Ascending aorta (tissue), 2 donors: ENCODE measurements at regions of chrX and their contacts with region 1.

Region 1: DNA sequence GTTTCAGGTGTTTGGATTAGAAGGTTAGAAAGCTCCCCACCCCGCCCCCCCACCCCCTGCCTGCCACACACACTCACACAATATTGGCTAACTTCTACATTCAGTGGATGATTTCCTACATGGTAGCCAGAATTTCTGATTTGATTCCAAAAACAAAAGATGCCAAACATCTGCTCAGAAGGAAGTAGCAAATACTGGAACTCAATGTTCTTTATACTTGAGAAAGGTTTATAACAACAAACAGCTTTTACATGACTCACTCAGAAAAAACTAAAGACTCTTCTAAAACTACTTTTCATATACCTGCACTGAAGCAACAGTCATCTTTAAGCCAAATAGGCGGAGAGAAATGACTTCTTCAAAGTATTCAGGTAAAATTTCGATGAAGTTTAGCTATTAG is 750.5 kb upstream of the POU3F4 start:
- DNase-seq: no peak
- H3K4me3 ChIP-seq: no peak overlapping the region
- H3K27ac ChIP-seq: no peak overlapping the region
- H3K4me1 ChIP-seq: no peaks in the 10 kb centered on the region
- H3K27me3 ChIP-seq: no peaks in the 10 kb centered on the region
- CTCF ChIP-seq: no peak

Region 2: DNA sequence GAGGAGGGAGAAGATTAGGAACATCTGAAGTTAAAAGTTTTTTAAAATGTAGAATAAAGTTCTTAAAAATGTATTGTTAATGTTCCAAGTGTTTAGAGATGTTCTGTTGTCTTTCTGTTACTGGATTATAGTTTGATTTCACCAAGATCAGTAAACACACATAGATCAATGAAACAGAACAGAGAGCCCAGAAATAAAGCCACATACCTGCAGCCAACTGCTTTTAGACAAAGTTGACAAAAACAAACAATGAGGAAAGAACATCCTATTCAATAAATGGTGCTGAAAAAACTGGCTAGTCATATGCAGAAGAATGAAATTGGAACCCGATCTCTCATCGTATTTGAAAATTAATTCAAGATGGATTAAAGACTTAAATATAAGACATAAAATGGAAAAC is 215.8 kb before region 1 on chrX:
- intact Hi-C with region 1: no loop called
- DNase-seq: no peak
- H3K4me3 ChIP-seq: no peak overlapping the region
- H3K27ac ChIP-seq: no peak overlapping the region
- H3K4me1 ChIP-seq: no peaks in the 10 kb centered on the region
- H3K27me3 ChIP-seq: no peaks in the 10 kb centered on the region
- CTCF ChIP-seq: no peak

Region 3: DNA sequence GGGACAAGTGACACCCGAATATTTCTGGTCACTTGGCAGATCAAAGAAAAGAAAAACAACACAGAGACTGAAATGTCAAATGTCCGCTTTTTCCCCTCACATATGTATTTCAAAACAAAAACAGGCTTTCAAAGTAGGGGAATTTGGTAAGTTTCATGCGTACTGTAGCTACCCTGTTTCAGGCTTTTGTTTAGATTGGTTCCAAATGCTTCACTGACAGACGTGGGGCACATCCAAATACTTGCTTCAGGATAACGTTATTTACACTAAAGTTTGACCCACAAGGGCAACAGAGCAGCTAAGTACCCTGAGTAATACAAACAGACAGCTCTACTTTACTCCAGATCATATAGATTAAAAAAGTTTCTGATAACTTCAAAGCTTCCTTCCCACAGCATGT is 54.1 kb before region 1 on chrX:
- intact Hi-C with region 1: loop called (anchors 5 kb)
- DNase-seq: no peak
- H3K4me3 ChIP-seq: no peak overlapping the region
- H3K27ac ChIP-seq: no peak overlapping the region
- H3K4me1 ChIP-seq: no peaks in the 10 kb centered on the region
- H3K27me3 ChIP-seq: no peaks in the 10 kb centered on the region
- CTCF ChIP-seq: no peak

Region 4: GRCh38 chrX:82782014-82782413 is 24.4 kb after region 1 on chrX:
- intact Hi-C with region 1: no loop called
- DNase-seq: no peak
- H3K4me3 ChIP-seq: no peak overlapping the region
- H3K27ac ChIP-seq: no peak overlapping the region
- H3K4me1 ChIP-seq: no peaks in the 10 kb centered on the region
- H3K27me3 ChIP-seq: no peaks in the 10 kb centered on the region
- CTCF ChIP-seq: no peak